ENCODE measurements at regions of chr4 and their contacts with region 1.

Region 1: DNA sequence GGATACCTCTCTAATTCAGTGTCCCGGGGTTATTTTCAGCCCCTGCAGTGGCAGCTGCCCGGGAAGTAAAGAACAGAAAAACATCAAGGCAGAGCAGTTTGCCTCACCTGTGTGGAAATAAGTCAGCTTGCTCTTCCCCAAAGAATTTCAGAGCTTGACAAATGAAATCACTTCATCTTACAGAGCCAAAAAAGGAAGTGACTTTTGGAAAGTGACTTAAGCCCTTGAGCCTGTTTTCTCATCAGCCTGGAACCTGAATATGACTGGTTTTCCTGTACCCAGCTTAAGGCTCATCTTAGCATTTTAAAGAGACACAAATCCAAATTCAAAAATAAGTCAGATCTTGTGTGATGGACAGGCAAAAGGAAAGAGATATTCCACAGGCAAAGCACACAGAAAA is 211.6 kb downstream of the RCHY1 start:
- DNase-seq: peak; percentile 6
- H3K4me3 Mint-ChIP-seq: no peak overlapping the region
- H3K27ac Mint-ChIP-seq: no peak overlapping the region
- H3K4me1 Mint-ChIP-seq: no peaks in the 10 kb centered on the region
- H3K27me3 Mint-ChIP-seq: peaks cover 13% of the 10 kb centered on the region
- CTCF ChIP-seq: no peak

Region 2: DNA sequence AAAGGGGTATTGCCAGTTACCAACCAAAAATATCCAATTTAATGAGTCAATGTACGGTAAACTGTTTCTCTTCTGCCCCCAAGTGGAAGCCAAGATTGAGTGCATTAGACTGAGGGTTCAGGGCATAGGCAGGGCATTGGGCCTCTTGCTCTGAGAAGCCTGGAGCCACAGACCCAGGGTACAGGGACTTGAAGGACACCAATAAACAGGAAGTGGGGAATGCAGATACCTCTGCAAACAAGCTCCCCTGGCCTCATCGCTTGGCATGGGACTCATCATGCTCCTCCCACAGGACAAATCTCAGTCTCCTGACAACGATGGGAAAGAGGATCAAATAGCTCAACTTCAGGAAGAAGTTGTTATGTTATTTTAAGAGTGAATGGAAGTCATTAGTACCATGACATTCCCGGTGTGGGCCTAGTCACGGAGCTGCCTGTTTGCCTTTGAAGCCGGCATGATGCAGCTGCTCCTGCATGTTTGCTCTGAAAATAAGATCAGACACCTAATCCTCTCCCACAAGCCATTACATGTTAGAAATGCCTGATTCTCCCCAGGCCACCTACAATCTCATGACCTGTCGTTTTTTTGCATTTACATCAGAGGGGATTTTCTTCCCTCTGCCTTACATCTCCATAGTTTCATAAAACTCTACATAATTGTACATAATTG is 12.6 kb before region 1 on chr4:
- CTCF ChIA-PET with region 1: interaction called, 12 read pairs
- POLR2A ChIA-PET with region 1: no interaction called
- intact Hi-C with region 1: no loop called
- DNase-seq: peak; percentile 65
- H3K4me3 Mint-ChIP-seq: no peak overlapping the region
- H3K27ac Mint-ChIP-seq: no peak overlapping the region
- H3K4me1 Mint-ChIP-seq: no peaks in the 10 kb centered on the region
- H3K27me3 Mint-ChIP-seq: no peaks in the 10 kb centered on the region
- CTCF ChIP-seq: peak; percentile 59

Region 3: DNA sequence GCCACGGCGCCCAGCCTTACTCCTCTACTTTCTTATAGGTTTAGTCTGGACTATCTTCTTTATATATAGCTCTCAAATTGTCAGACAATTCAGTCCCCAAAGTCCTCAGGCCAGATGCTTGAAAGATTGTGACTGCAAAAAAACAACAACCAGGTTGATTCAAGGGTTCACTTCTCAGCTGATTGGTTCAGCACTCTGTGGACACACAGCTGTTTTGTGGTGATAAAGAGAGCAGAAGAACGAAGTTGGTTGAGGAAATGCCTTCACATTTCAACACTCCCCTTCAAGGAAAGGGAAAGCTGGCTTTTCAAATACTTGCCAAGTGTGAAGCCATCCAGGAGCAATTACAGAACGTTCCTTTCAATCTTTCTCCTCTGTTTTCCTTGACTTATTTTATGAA is 1299.1 kb after region 1 on chr4:
- CTCF ChIA-PET with region 1: no interaction called
- POLR2A ChIA-PET with region 1: no interaction called
- intact Hi-C with region 1: no loop called
- DNase-seq: no peak
- H3K4me3 Mint-ChIP-seq: no peak overlapping the region
- H3K27ac Mint-ChIP-seq: no peak overlapping the region
- H3K4me1 Mint-ChIP-seq: no peaks in the 10 kb centered on the region
- H3K27me3 Mint-ChIP-seq: no peaks in the 10 kb centered on the region
- CTCF ChIP-seq: no peak